SK-N-SH (cell line): ENCODE measurements at regions of chr7 and their contacts with region 1.

Region 1: GRCh38 chr7:134432296-134433152 is 26.4 kb downstream of the AKR1B1 start:
- DNase-seq: peak; percentile 92
- H3K4me3 ChIP-seq: peak overlapping the region; percentile 54 to 64
- H3K27ac ChIP-seq: peak overlapping the region; percentile 89 to 93
- H3K4me1 ChIP-seq: peaks cover 0 to 16% of the 10 kb centered on the region in 2 experiments; a peak in 1 of 4 replicates
- H3K27me3 ChIP-seq: no peaks in the 10 kb centered on the region
- CTCF ChIP-seq: peak; percentile 97
- EP300 ChIP-seq: 0 out of 4 replicates have a peak, but pooled peaks of 1 of the 2 experiments have one; percentile 23
- RAD21 ChIP-seq: peak; percentile 99

Region 2: GRCh38 chr7:134448700-134449229 is 16.2 kb after region 1 on chr7:
- CTCF ChIA-PET with region 1: interaction called, 75 read pairs
- POLR2A ChIA-PET with region 1: interaction called, 4 read pairs
- DNase-seq: no peak
- H3K4me3 ChIP-seq: no peak overlapping the region
- H3K27ac ChIP-seq: peak overlapping the region in 1 of 2 experiments; percentile 43; a peak in 2 of 4 replicates
- H3K4me1 ChIP-seq: peaks cover 11 to 19% of the 10 kb centered on the region in 2 experiments; a peak in 2 of 4 replicates
- H3K27me3 ChIP-seq: no peaks in the 10 kb centered on the region
- CTCF ChIP-seq: no peak
- EP300 ChIP-seq: no peak
- RAD21 ChIP-seq: no peak

Region 3: DNA sequence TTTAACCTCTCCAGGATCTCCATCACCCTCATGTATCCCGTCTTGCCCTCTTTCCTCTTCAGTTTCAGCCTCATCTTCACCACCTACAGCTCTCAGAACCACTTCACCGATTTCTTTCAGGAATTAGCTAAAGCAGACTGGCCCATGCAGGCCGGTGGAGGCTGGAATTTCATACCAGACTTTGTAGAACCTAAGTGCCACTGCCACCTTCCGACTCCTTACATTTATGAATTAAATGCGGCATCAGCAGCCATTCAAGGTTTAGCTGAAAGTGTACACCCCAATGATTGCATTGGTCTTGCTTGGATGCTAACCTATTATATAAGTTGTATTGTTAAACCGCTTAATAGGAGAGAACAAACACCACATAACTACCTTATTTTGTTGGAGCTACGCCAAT is 59.4 kb after region 1 on chr7:
- CTCF ChIA-PET with region 1: interaction called, 11 read pairs
- POLR2A ChIA-PET with region 1: no interaction called
- DNase-seq: no peak
- H3K4me3 ChIP-seq: no peak overlapping the region
- H3K27ac ChIP-seq: no peak overlapping the region
- H3K4me1 ChIP-seq: peaks cover 0 to 2% of the 10 kb centered on the region in 2 experiments; a peak in 1 of 4 replicates
- H3K27me3 ChIP-seq: peaks cover 17% of the 10 kb centered on the region; the same call in 1 of the 2 replicates
- CTCF ChIP-seq: no peak
- EP300 ChIP-seq: no peak
- RAD21 ChIP-seq: no peak

Region 4: DNA sequence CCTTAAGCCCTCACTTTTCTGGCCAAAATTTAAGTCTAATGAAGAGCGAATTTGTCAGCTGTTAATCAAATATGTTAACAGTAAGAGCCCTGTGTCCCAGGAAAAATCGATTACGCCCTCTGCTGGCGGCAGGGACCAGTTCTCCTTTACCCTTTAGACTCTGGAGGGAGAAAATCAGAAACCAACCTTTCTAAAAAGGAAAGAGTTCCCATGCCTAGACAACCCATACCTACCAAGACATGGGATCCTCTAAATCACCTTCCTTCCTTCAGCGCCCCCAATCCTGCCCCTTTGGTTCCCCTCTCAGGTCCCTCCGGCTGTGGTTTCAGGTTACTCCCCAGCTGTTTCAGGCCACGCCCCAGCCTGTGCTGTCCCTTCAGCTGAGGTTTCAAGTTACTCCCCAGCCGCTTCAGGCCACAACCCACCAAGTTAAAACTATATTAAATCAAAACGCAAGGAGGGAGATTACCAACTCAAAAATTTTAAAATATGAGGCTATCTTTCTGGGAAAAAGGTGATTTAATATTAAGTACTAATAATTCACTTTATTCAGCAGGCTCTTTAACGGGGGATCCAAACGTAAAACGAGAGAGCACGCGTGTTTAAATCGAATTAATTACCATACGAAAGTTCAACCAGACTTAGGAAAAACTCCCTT is 115.0 kb after region 1 on chr7:
- CTCF ChIA-PET with region 1: interaction called, 71 read pairs
- POLR2A ChIA-PET with region 1: interaction called, 3 read pairs
- DNase-seq: peak; percentile 60
- H3K4me3 ChIP-seq: peak overlapping the region; percentile 37 to 57
- H3K27ac ChIP-seq: no peak overlapping the region
- H3K4me1 ChIP-seq: peaks cover 0 to 4% of the 10 kb centered on the region in 2 experiments; a peak in 1 of 4 replicates
- H3K27me3 ChIP-seq: peaks cover 57% of the 10 kb centered on the region
- CTCF ChIP-seq: peak; percentile 100
- EP300 ChIP-seq: no peak
- RAD21 ChIP-seq: peak; percentile 68

Region 5: DNA sequence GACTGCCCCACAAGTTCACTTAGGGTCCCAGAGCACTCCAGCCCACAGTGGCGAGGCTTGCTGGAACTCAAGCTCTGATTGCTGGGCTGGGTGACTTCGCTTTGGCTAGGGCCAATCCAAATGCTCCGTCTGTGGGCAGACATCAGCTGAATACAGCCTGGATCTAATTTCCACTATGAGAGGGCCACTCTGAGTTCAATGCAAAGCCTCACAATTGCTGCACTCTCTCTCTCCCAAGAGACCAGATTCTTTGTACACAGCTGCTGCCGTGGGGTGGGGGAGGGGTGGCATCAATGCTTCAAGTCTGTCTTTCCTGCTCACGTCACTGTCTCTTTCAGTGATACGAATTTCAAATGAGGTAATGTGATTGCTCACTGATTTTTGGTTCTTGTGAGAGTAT is 166.8 kb after region 1 on chr7:
- CTCF ChIA-PET with region 1: interaction called, 15 read pairs
- POLR2A ChIA-PET with region 1: no interaction called
- DNase-seq: no peak
- H3K4me3 ChIP-seq: no peak overlapping the region
- H3K27ac ChIP-seq: no peak overlapping the region
- H3K4me1 ChIP-seq: no peaks in the 10 kb centered on the region; a peak in 2 of 4 replicates
- H3K27me3 ChIP-seq: no peaks in the 10 kb centered on the region
- CTCF ChIP-seq: no peak
- EP300 ChIP-seq: no peak
- RAD21 ChIP-seq: no peak

Region 6: DNA sequence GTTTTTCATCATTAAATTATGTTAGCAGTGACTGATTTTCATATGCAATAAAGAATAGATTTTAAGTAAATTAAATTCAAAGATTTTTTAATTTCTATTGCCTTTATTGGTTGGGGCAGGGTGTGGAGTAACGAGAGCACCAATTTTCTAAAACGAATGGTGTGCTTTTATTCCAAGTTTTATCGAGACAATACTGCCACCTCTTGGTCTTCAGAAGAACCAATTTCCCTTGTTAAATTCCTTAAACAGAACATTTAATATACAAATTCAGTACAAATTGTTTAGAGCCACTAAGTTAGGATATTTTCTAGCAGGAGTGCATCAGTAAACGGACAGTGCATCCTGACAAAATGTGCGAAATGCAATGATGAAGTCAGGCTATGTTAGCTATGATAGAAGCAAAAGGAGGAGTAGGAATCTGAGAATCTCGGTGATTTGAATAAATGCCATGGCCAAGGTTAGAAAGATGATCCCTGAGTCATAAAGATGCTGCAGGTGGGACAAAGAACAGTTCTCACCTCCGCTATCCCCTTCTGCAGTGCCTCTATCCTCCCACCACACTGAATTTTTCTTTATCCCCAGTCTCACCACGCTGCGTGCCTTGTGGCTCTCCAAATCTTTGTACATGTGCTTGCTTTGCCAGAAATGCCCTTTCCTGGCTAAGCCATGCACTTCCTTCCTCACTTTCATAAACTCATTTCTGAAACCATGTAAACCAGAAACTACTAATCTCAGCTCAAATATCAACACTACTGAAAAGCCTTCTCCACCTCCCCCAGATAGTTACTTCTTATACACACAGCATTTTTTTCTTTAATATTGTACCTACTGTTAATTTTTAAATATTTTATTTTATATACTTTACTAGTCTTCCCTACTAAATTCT is 521.9 kb after region 1 on chr7:
- CTCF ChIA-PET with region 1: interaction called, 11 read pairs
- POLR2A ChIA-PET with region 1: no interaction called
- DNase-seq: peak; percentile 44
- H3K4me3 ChIP-seq: no peak overlapping the region
- H3K27ac ChIP-seq: no peak overlapping the region
- H3K4me1 ChIP-seq: no peaks in the 10 kb centered on the region
- H3K27me3 ChIP-seq: no peaks in the 10 kb centered on the region
- CTCF ChIP-seq: peak; percentile 79
- EP300 ChIP-seq: no peak
- RAD21 ChIP-seq: peak; percentile 86